Gastrocnemius medialis (tissue), 4 donors: ENCODE measurements at regions of chr7 and their contacts with region 1.

Region 1: GRCh38 chr7:148940702-148941597 is 56.9 kb upstream of the EZH2 start:
- DNase-seq: peak; percentile 66 to 81
- ATAC-seq: peak; percentile 89 to 90
- H3K4me3 ChIP-seq: peak overlapping the region; percentile 77 to 99 (median 87)
- H3K27ac ChIP-seq: peak overlapping the region; percentile 92 to 97 (median 94)
- H3K4me1 ChIP-seq: peaks cover 7 to 10% of the 10 kb centered on the region in 2 donors
- H3K27me3 ChIP-seq: no peaks in the 10 kb centered on the region
- CTCF ChIP-seq: no peak
- POLR2A ChIP-seq: peak; percentile 76 to 77

Region 2: GRCh38 chr7:148698397-148699023 is 242.4 kb before region 1 on chr7 and contains the start of gene CUL1:
- in situ Hi-C with region 1: no loop called
- intact Hi-C with region 1: loop called (anchors 2 kb)
- DNase-seq: peak; percentile 75 to 82
- ATAC-seq: peak; percentile 74 to 82
- H3K4me3 ChIP-seq: peak within 1 kb of the TSS; percentile 56 to 81 (median 72)
- H3K27ac ChIP-seq: peak within 1 kb of the TSS; percentile 85 to 96 (median 92)
- H3K4me1 ChIP-seq: peaks cover 34 to 35% of the 10 kb centered on the region in 2 donors
- H3K27me3 ChIP-seq: no peaks in the 10 kb centered on the region
- CTCF ChIP-seq: no peak
- POLR2A ChIP-seq: peak; percentile 68 to 72
- total RNA-seq, gene CUL1: 78.7 to 101 (median 84.6) TPM

Region 3: GRCh38 chr7:148962823-148963582 is 22.1 kb after region 1 on chr7:
- in situ Hi-C with region 1: no loop called
- intact Hi-C with region 1: loop called (anchors 2 kb)
- DNase-seq: peak; percentile 22 to 57
- ATAC-seq: peak; percentile 79 to 84
- H3K4me3 ChIP-seq: peak overlapping the region; percentile 51 to 72 (median 65)
- H3K27ac ChIP-seq: peak overlapping the region; percentile 65 to 78 (median 67)
- H3K4me1 ChIP-seq: peaks cover 9 to 14% of the 10 kb centered on the region in 2 donors
- H3K27me3 ChIP-seq: no peaks in the 10 kb centered on the region
- CTCF ChIP-seq: peak in 4 of 5 experiments; percentile 54 to 67 (median 61)
- POLR2A ChIP-seq: no peak

Region 4: GRCh38 chr7:149028346-149029109 is 87.6 kb after region 1 on chr7 and contains the start of gene PDIA4:
- in situ Hi-C with region 1: no loop called
- intact Hi-C with region 1: loop called (anchors 1 kb)
- DNase-seq: peak; percentile 99
- ATAC-seq: peak; percentile 97
- H3K4me3 ChIP-seq: peak within 1 kb of the TSS; percentile 70 to 93 (median 86)
- H3K27ac ChIP-seq: peak within 1 kb of the TSS; percentile 83 to 98 (median 94)
- H3K4me1 ChIP-seq: peaks cover 16 to 21% of the 10 kb centered on the region in 2 donors
- H3K27me3 ChIP-seq: no peaks in the 10 kb centered on the region
- CTCF ChIP-seq: peak in 4 of 5 experiments; percentile 34 to 44 (median 40)
- POLR2A ChIP-seq: peak; percentile 72 to 94
- total RNA-seq, gene PDIA4: 10.8 to 19.6 (median 14.2) TPM

Region 5: GRCh38 chr7:149090397-149091195 is 149.6 kb after region 1 on chr7 and contains the start of gene ZNF786:
- in situ Hi-C with region 1: no loop called
- intact Hi-C with region 1: no loop called
- DNase-seq: peak; percentile 70 to 73
- ATAC-seq: peak; percentile 91 to 94
- H3K4me3 ChIP-seq: peak within 1 kb of the TSS; percentile 95 to 99 (median 96)
- H3K27ac ChIP-seq: peak within 1 kb of the TSS; percentile 90 to 100 (median 94)
- H3K4me1 ChIP-seq: peaks cover 6 to 10% of the 10 kb centered on the region in 2 donors
- H3K27me3 ChIP-seq: no peaks in the 10 kb centered on the region
- CTCF ChIP-seq: peak; percentile 86 to 98 (median 94)
- POLR2A ChIP-seq: peak; percentile 67 to 81
- total RNA-seq, gene ZNF786: 1.9 to 6.1 (median 2.7) TPM

Region 6: DNA sequence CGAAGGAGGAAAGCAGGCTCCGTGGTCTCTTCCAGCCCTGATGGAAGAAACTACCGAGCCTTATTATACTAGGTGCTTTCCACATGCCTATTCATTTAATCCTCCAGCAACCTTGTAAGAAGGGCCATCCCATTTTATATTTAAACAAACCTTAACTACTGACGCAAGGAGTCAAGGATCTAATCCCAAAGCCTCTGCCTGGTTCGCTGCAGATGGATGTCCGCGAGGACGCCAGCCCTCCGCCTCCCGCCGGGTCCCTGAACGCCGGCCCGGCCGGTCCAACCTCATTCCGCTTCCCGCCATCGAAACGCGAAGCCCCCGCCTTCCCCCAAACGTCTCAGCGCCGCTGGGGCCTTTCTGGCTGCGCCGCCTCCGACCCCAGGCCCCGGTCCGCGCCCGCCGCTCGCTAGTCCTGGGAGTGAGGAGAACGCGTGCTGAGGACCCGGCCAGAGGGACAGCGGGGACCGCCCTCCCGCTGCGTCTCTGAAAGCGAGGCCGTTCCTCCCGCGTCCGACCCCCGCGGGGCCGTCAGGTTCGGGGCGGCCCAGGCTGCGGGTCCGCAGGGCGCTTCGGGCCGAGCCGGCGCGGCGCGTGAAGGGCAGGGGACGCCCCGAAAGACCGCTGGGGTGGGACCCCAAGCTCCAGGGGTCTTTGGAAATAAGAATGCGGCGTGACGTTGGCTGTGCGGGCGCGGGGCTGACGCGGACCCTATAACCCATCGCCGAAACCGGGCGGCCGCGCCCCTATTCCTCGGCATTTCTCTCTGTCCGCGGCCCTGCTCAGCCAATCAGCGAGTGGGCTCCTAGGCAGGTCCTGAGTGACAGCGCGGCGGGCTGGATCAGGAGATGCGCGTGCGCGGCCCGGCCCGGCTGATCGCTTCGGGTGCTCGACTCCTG is 932.4 kb after region 1 on chr7 and contains the start of gene ATP6V0E2:
- in situ Hi-C with region 1: no loop called
- intact Hi-C with region 1: loop called (anchors 5 kb)
- DNase-seq: peak; percentile 95
- ATAC-seq: peak; percentile 91 to 92
- H3K4me3 ChIP-seq: peak within 1 kb of the TSS; percentile 71 to 84 (median 73)
- H3K27ac ChIP-seq: peak within 1 kb of the TSS; percentile 86 to 88 (median 87)
- H3K4me1 ChIP-seq: peaks cover 13 to 14% of the 10 kb centered on the region in 2 donors
- H3K27me3 ChIP-seq: no peaks in the 10 kb centered on the region
- CTCF ChIP-seq: peak in 2 of 5 experiments; percentile 5 to 9
- POLR2A ChIP-seq: peak; percentile 80 to 82
- total RNA-seq, gene ATP6V0E2: 9.0 to 46.3 (median 12.9) TPM